ENCODE measurements at regions of chr3 and their contacts with region 1.

Region 1: GRCh38 chr3:174417573-174417972 is 441.6 kb upstream of the NAALADL2 start:
- DNase-seq: no peak
- H3K4me3 ChIP-seq: no peak overlapping the region
- H3K27ac ChIP-seq: no peak overlapping the region
- H3K4me1 ChIP-seq: no peaks in the 10 kb centered on the region
- H3K27me3 ChIP-seq: no peaks in the 10 kb centered on the region
- CTCF ChIP-seq: no peak
- POLR2A ChIP-seq: no peak

Region 2: GRCh38 chr3:173513123-173513522 is 904.5 kb before region 1 on chr3:
- intact Hi-C with region 1: no loop called
- DNase-seq: no peak
- H3K4me3 ChIP-seq: no peak overlapping the region
- H3K27ac ChIP-seq: no peak overlapping the region
- H3K4me1 ChIP-seq: no peaks in the 10 kb centered on the region
- H3K27me3 ChIP-seq: no peaks in the 10 kb centered on the region
- CTCF ChIP-seq: no peak
- POLR2A ChIP-seq: no peak

Region 3: GRCh38 chr3:173993299-173993698 is 424.3 kb before region 1 on chr3:
- intact Hi-C with region 1: no loop called
- DNase-seq: no peak
- H3K4me3 ChIP-seq: no peak overlapping the region
- H3K27ac ChIP-seq: no peak overlapping the region
- H3K4me1 ChIP-seq: no peaks in the 10 kb centered on the region
- H3K27me3 ChIP-seq: no peaks in the 10 kb centered on the region
- CTCF ChIP-seq: no peak
- POLR2A ChIP-seq: no peak

Region 4: GRCh38 chr3:174403831-174404230 is 13.7 kb before region 1 on chr3:
- intact Hi-C with region 1: no loop called
- DNase-seq: no peak
- H3K4me3 ChIP-seq: no peak overlapping the region
- H3K27ac ChIP-seq: no peak overlapping the region
- H3K4me1 ChIP-seq: no peaks in the 10 kb centered on the region
- H3K27me3 ChIP-seq: no peaks in the 10 kb centered on the region
- CTCF ChIP-seq: no peak
- POLR2A ChIP-seq: no peak

Region 5: DNA sequence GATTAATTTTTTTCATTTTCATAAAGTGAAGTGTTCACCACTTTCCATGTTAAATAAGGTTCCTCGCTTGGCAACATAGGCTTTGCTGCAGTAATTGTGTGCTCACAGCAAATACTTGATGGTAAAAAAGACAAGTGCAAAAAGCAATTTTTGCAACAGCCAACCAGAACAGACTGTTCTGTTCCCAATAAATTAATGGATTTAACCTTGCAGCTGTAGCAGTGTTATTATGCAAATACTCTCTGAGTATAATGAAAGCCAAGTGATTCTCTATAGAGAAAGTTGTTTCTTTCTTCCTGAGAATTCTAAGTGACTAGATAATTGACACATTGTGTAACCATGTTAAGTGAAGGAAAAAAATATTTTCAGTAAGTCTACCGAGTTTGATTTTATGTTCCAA is 257.8 kb after region 1 on chr3:
- intact Hi-C with region 1: loop called (anchors 5 kb)
- DNase-seq: no peak
- H3K4me3 ChIP-seq: no peak overlapping the region
- H3K27ac ChIP-seq: no peak overlapping the region
- H3K4me1 ChIP-seq: no peaks in the 10 kb centered on the region
- H3K27me3 ChIP-seq: no peaks in the 10 kb centered on the region
- CTCF ChIP-seq: no peak
- POLR2A ChIP-seq: no peak

Region 6: DNA sequence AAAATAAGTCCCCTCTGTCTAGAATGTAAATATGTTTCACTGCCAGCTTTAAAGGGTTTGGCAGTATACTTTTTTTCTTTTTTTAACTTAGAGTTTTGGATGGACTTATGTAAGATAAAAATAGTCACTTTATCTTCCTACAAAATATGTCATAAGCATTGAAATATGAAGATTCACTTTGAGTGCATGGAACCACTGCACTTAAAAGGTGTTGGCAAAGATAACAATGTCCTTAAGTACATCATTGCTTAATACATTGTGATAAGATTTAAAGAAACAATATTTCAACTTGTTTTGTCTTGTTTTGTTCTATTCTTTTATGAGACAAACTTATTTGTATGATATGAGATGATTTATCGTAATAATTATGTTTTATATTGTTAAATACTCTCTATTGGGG is 375.3 kb after region 1 on chr3:
- intact Hi-C with region 1: no loop called
- DNase-seq: no peak
- H3K4me3 ChIP-seq: no peak overlapping the region
- H3K27ac ChIP-seq: no peak overlapping the region
- H3K4me1 ChIP-seq: no peaks in the 10 kb centered on the region
- H3K27me3 ChIP-seq: no peaks in the 10 kb centered on the region
- CTCF ChIP-seq: no peak
- POLR2A ChIP-seq: no peak

Measured in breast epithelium (tissue), 4 donors.